ENCODE measurements at regions of chr19 and their contacts with region 1.

Region 1: DNA sequence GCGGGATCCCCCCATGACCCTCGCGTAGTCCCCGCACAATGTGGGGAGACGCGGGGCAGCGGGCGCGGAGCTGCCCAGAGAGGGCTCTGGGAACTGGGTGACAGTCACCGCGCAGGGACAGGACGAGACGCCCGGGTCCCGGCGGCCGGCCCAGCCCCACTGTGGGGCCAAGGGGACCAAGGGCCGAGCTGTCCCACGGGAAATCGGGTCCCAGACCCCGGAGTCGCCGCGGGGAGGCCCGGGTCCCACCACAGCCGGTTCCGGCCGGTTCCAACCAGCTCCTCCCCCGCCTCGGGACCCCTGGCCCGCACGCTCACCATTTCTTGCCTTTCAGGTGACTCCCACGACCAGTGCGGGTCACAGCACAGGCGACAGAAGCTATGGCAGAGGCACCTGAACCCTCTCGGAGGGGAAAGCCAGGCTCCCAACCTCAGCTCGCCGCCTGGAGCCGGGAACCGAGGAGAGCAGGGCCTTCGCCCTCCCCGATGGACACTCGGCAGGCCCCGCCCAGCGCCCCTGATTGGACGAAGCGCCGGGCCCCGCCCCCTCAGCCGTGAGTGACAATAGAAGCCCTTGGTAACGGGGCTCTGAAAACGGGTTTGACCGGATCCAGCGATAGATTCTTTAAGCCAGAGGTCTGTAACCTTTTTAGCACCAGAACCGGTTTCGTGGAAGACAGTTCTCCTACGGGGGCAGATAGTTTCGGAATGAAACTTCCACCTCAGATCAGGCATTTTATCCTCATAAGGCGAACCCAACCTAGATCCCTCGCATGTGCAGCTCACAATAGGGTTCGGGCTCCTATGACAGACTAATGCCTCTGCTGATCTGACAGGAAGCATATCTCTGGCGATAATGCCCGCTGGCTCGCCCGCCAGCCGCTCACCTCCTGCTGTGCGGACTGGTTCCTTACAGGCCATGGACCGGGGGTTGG is at the start of gene ZNF433:
- DNase-seq: peak; percentile 99
- ATAC-seq: peak; percentile 98
- H3K4me3 Mint-ChIP-seq: peak within 1 kb of the TSS; percentile 83
- H3K27ac Mint-ChIP-seq: peak within 1 kb of the TSS; percentile 93
- H3K4me1 Mint-ChIP-seq: peaks cover 26% of the 10 kb centered on the region
- H3K27me3 Mint-ChIP-seq: peaks cover 32% of the 10 kb centered on the region
- CTCF ChIP-seq: no peak
- total RNA-seq, gene ZNF433: 2.9 TPM in 3 replicates

Region 2: GRCh38 chr19:12052497-12053169 is 17.1 kb after region 1 on chr19 and contains the start of gene ZNF878:
- CTCF ChIA-PET with region 1: interaction called, 10 read pairs
- POLR2A ChIA-PET with region 1: interaction called, 34 read pairs
- DNase-seq: peak; percentile 99
- ATAC-seq: peak; percentile 98
- H3K4me3 Mint-ChIP-seq: peak within 1 kb of the TSS; percentile 91
- H3K27ac Mint-ChIP-seq: peak within 1 kb of the TSS; percentile 98
- H3K4me1 Mint-ChIP-seq: peaks cover 18% of the 10 kb centered on the region
- H3K27me3 Mint-ChIP-seq: peaks cover 2% of the 10 kb centered on the region; the same call in 1 of the 2 replicates
- CTCF ChIP-seq: no peak
- total RNA-seq, gene ZNF878: 10.1 to 12.5 TPM (median 10.7 TPM) in 3 replicates